ENCODE measurements at regions of chr17 and their contacts with region 1.

Region 1: DNA sequence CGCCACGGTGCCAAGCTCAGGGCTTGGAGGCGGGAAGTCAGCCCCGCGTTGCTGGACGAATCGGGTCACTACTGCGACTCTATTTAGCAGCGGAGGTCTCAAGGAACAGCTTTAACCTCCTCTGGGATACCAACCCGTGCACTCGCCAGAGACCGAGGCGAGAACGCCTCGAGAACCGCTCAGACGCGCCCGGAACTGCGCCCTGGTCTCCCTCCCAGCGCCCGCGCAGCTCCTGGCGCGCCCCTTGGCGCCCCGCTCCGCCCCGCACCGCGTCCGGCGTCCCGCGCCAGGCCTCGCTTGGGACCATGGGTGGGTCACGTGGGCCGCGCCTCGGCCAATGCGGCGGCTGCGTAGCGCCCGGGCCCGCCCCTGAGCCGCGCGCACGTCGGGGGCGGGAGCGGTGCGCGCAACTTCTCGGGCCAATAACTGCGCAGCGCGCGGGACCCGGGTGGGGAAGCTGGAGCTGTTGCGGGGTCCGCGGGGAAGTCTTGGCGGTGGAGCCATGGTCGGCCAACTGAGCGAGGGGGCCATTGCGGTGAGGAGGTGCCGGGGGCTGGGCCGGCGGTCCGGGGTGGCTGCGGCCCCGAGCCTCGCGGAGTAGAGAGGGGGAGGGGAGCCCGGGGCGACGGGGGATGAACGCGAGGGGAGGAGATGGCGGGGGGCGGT is at the starts of genes RPA1 and SMYD4:
- DNase-seq: peak; percentile 92
- ATAC-seq: peak; percentile 99
- H3K4me3 Mint-ChIP-seq: peak within 1 kb of the TSS; percentile 91
- H3K27ac Mint-ChIP-seq: peak within 1 kb of the TSS; percentile 91
- H3K4me1 Mint-ChIP-seq: peaks cover 71% of the 10 kb centered on the region
- H3K27me3 Mint-ChIP-seq: no peaks in the 10 kb centered on the region
- total RNA-seq, gene RPA1: 314 to 325 TPM
- total RNA-seq, gene SMYD4: 40.3 to 41.7 TPM

Region 2: DNA sequence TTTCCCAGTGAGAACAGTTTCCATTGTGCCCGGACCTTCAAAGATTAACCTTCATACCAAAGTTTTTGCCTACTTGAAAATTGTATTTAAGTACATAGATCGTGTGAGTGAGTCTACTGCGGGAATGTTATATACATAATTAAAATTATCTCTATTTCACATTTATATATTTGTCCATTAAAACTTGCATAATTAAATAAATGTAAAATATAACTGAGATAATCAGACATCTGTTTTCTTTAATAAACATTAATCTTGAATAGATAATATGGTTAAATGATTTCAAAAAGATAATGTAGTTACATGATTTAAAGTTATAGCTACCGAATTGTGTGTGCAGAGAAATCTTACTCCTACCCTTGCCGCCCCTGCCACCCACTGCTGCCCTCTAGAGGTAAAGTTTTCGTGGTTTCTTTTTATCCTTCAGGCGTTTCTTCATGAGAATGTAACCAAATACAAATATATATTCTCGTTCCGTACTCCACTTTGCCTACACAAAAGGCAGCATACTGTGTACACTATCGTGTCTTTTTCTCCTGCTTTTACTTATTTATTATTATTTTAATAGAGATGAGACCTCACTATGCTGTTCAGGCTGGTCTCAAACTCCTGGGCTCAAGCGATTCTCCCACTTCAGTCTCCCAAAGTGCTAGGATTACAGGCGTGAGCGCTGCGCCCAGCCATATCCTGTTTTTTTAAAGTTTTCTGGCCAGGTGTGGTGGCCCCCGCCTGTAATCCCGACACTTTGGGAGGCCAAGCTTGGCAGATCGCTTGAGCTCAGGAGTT is 35.7 kb after region 1 on chr17:
- CTCF ChIA-PET with region 1: interaction called, 12 read pairs
- POLR2A ChIA-PET with region 1: interaction called, 15 read pairs
- DNase-seq: peak; percentile 70
- ATAC-seq: peak; percentile 59
- H3K4me3 Mint-ChIP-seq: no peak overlapping the region
- H3K27ac Mint-ChIP-seq: no peak overlapping the region
- H3K4me1 Mint-ChIP-seq: peaks cover 20% of the 10 kb centered on the region
- H3K27me3 Mint-ChIP-seq: no peaks in the 10 kb centered on the region

Region 3: GRCh38 chr17:1870592-1870991 is 40.9 kb after region 1 on chr17:
- CTCF ChIA-PET with region 1: interaction called, 12 read pairs
- POLR2A ChIA-PET with region 1: interaction called, 15 read pairs
- DNase-seq: peak; percentile 39
- ATAC-seq: peak; percentile 67
- H3K4me3 Mint-ChIP-seq: peak overlapping the region; percentile 58
- H3K27ac Mint-ChIP-seq: peak overlapping the region; percentile 90
- H3K4me1 Mint-ChIP-seq: peaks cover 61% of the 10 kb centered on the region
- H3K27me3 Mint-ChIP-seq: no peaks in the 10 kb centered on the region

Measured in activated CD8-positive, alpha-beta T cell treated with anti-CD3 and anti-CD28 coated beads, Interleukin-2, amount 10 ng/mL, durations not matched to agents 7 days and 5 days (primary cell).